K562 (cell line): ENCODE measurements at regions of chr9 and their contacts with region 1.

Region 1: GRCh38 chr9:79571309-79572031 is at the start of gene TLE4:
- DNase-seq: peak; percentile 77 to 92 (median 82)
- ATAC-seq: peak; percentile 94
- H3K4me3 ChIP-seq: peak within 1 kb of the TSS; percentile 52
- H3K27ac ChIP-seq: peak within 1 kb of the TSS; percentile 64
- H3K4me1 ChIP-seq: peaks cover 0 to 27% of the 10 kb centered on the region in 2 experiments; a peak in 2 of 5 replicates
- H3K27me3 ChIP-seq: no peaks in the 10 kb centered on the region
- CTCF ChIP-seq: no peak
- EP300 ChIP-seq: no peak
- POLR2A ChIP-seq: peak; percentile 76
- RAD21 ChIP-seq: no peak
- polyA plus RNA-seq, gene TLE4: 1.1 TPM

Region 2: DNA sequence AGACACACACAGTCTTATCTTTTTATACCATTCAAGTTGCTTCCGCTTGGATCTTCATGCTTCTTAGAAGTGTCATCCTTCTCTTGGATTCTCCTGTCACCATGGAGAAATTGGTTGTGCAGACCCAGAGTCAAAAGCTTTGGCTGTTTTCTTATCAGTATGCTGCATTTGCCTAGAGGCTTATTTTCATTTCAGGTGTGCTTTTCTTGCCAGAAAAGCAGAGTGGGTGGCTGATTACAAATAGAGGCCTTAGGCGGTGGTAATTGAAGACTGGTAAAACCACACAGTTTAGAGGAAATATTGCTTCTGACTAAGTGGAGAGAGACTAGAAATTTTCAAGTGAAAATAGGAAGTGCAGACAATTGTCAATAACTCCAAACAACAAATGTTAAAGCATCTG is 69.9 kb before region 1 on chr9:
- CTCF ChIA-PET with region 1: no interaction called
- POLR2A ChIA-PET with region 1: no interaction called
- in situ Hi-C with region 1: no loop called
- intact Hi-C with region 1: no loop called
- DNase-seq: peak in 1 of 4 experiments; percentile 1
- ATAC-seq: no peak
- H3K4me3 ChIP-seq: no peak overlapping the region
- H3K27ac ChIP-seq: no peak overlapping the region
- H3K4me1 ChIP-seq: no peaks in the 10 kb centered on the region
- H3K27me3 ChIP-seq: no peaks in the 10 kb centered on the region
- CTCF ChIP-seq: no peak
- EP300 ChIP-seq: no peak
- POLR2A ChIP-seq: no peak
- RAD21 ChIP-seq: no peak

Region 3: GRCh38 chr9:79623799-79624721 is 52.6 kb after region 1 on chr9:
- CTCF ChIA-PET with region 1: no interaction called
- POLR2A ChIA-PET with region 1: no interaction called
- in situ Hi-C with region 1: no loop called
- intact Hi-C with region 1: loop called (anchors 5 kb)
- DNase-seq: peak; percentile 4 to 52 (median 16)
- ATAC-seq: peak; percentile 86
- H3K4me3 ChIP-seq: no peak overlapping the region
- H3K27ac ChIP-seq: peak overlapping the region; percentile 64
- H3K4me1 ChIP-seq: peaks cover 0 to 2% of the 10 kb centered on the region in 2 experiments; a peak in 2 of 5 replicates
- H3K27me3 ChIP-seq: no peaks in the 10 kb centered on the region
- CTCF ChIP-seq: no peak
- EP300 ChIP-seq: no peak
- POLR2A ChIP-seq: no peak
- RAD21 ChIP-seq: no peak

Region 4: GRCh38 chr9:79673614-79674013 is 102.1 kb after region 1 on chr9:
- CTCF ChIA-PET with region 1: no interaction called
- POLR2A ChIA-PET with region 1: no interaction called
- in situ Hi-C with region 1: no loop called
- intact Hi-C with region 1: loop called (anchors 5 kb)
- DNase-seq: peak in 1 of 4 experiments; percentile 5
- ATAC-seq: peak; percentile 37; the same call in 2 of the 3 replicates
- H3K4me3 ChIP-seq: no peak overlapping the region
- H3K27ac ChIP-seq: peak overlapping the region; percentile 56; the same call in 1 of the 3 replicates
- H3K4me1 ChIP-seq: peaks cover 0 to 2% of the 10 kb centered on the region in 2 experiments; a peak in 2 of 5 replicates
- H3K27me3 ChIP-seq: no peaks in the 10 kb centered on the region
- CTCF ChIP-seq: no peak
- EP300 ChIP-seq: no peak
- POLR2A ChIP-seq: no peak
- RAD21 ChIP-seq: no peak